T-cell (primary cell): ENCODE measurements at regions of chr9 and their contacts with region 1.

Region 1: GRCh38 chr9:121399883-121400607 is 30.0 kb upstream of the STOM start:
- DNase-seq: peak in 2 of 35 experiments; percentile 7 to 82
- ATAC-seq: peak in 2 of 4 experiments; percentile 50 to 68
- H3K4me3 ChIP-seq: no peak overlapping the region
- H3K4me3 Mint-ChIP-seq: no peak overlapping the region
- H3K27ac ChIP-seq: no peak overlapping the region
- H3K27ac Mint-ChIP-seq: no peak overlapping the region
- H3K4me1 ChIP-seq: no peaks in the 10 kb centered on the region
- H3K4me1 Mint-ChIP-seq: no peaks in the 10 kb centered on the region
- H3K27me3 ChIP-seq: no peaks in the 10 kb centered on the region
- H3K27me3 Mint-ChIP-seq: peaks cover 0 to 3% of the 10 kb centered on the region in 2 donors

Region 2: DNA sequence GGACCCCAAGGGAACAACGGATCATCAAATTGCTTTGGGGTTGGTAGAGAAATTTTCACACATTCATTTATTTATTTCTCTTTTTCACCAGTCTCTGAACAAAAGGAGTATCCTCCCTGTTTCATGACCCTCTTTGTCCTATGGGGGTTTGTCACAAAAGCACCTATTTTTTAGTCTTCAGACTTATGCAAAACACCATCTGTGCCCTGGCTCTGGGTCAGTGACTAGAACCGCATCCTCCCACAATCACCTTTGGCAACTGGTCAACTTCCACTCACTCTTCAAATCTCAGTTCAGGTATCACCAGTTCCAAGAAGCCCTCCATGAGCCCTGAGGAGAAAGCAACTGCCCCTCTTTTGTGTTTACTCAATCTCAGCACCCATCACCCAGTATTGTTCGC is 1215.8 kb before region 1 on chr9:
- CTCF ChIA-PET with region 1: no interaction called
- POLR2A ChIA-PET with region 1: no interaction called
- DNase-seq: no peak
- ATAC-seq: no peak
- H3K4me3 ChIP-seq: no peak overlapping the region
- H3K4me3 Mint-ChIP-seq: no peak overlapping the region
- H3K27ac ChIP-seq: no peak overlapping the region
- H3K27ac Mint-ChIP-seq: no peak overlapping the region
- H3K4me1 ChIP-seq: no peaks in the 10 kb centered on the region
- H3K4me1 Mint-ChIP-seq: no peaks in the 10 kb centered on the region
- H3K27me3 ChIP-seq: peaks cover 0 to 2% of the 10 kb centered on the region in 2 experiments
- H3K27me3 Mint-ChIP-seq: peaks cover 0 to 16% of the 10 kb centered on the region in 2 donors

Region 3: GRCh38 chr9:121439711-121440664 is 39.9 kb after region 1 on chr9:
- CTCF ChIA-PET with region 1: no interaction called
- POLR2A ChIA-PET with region 1: no interaction called
- DNase-seq: no peak
- ATAC-seq: no peak
- H3K4me3 ChIP-seq: no peak overlapping the region
- H3K4me3 Mint-ChIP-seq: no peak overlapping the region
- H3K27ac ChIP-seq: no peak overlapping the region
- H3K27ac Mint-ChIP-seq: no peak overlapping the region
- H3K4me1 ChIP-seq: no peaks in the 10 kb centered on the region
- H3K4me1 Mint-ChIP-seq: no peaks in the 10 kb centered on the region
- H3K27me3 ChIP-seq: no peaks in the 10 kb centered on the region
- H3K27me3 Mint-ChIP-seq: peaks cover 10 to 11% of the 10 kb centered on the region in 2 donors

Region 4: GRCh38 chr9:122426723-122427122 is 1026.7 kb after region 1 on chr9:
- CTCF ChIA-PET with region 1: no interaction called
- POLR2A ChIA-PET with region 1: no interaction called
- DNase-seq: no peak
- ATAC-seq: no peak
- H3K4me3 ChIP-seq: no peak overlapping the region
- H3K4me3 Mint-ChIP-seq: no peak overlapping the region
- H3K27ac ChIP-seq: no peak overlapping the region
- H3K27ac Mint-ChIP-seq: no peak overlapping the region
- H3K4me1 ChIP-seq: no peaks in the 10 kb centered on the region
- H3K4me1 Mint-ChIP-seq: no peaks in the 10 kb centered on the region
- H3K27me3 ChIP-seq: no peaks in the 10 kb centered on the region
- H3K27me3 Mint-ChIP-seq: peaks cover 11 to 15% of the 10 kb centered on the region in 2 donors

Region 5: DNA sequence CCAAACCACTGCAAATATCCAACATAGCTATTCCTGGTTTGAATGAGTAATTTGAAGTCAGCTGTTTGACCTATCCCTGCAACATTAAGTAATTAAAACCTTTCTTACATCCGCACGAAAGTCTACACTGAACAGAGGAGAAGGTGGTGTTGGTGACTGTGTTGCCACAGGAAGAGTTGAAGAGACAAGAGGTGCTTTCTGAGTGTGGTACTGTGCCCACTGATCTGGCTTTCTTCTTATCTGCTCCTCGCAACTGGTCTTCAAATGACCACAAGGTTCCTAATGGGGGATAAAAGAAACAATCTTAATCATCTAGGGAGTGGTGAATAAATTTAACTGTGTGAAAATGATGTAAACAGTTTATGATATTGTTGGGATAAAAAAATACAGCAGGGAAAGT is 1457.8 kb after region 1 on chr9:
- CTCF ChIA-PET with region 1: interaction called in 1 of 2 experiments, 10 read pairs
- POLR2A ChIA-PET with region 1: no interaction called
- DNase-seq: no peak
- ATAC-seq: no peak
- H3K4me3 ChIP-seq: no peak overlapping the region
- H3K4me3 Mint-ChIP-seq: no peak overlapping the region
- H3K27ac ChIP-seq: no peak overlapping the region
- H3K27ac Mint-ChIP-seq: no peak overlapping the region
- H3K4me1 ChIP-seq: no peaks in the 10 kb centered on the region
- H3K4me1 Mint-ChIP-seq: peaks cover 0 to 2% (median 2%) of the 10 kb centered on the region in 3 donors
- H3K27me3 ChIP-seq: no peaks in the 10 kb centered on the region
- H3K27me3 Mint-ChIP-seq: no peaks in the 10 kb centered on the region